Lower leg skin (tissue), 4 donors: ENCODE measurements at regions of chr12 and their contacts with region 1.

Region 1: DNA sequence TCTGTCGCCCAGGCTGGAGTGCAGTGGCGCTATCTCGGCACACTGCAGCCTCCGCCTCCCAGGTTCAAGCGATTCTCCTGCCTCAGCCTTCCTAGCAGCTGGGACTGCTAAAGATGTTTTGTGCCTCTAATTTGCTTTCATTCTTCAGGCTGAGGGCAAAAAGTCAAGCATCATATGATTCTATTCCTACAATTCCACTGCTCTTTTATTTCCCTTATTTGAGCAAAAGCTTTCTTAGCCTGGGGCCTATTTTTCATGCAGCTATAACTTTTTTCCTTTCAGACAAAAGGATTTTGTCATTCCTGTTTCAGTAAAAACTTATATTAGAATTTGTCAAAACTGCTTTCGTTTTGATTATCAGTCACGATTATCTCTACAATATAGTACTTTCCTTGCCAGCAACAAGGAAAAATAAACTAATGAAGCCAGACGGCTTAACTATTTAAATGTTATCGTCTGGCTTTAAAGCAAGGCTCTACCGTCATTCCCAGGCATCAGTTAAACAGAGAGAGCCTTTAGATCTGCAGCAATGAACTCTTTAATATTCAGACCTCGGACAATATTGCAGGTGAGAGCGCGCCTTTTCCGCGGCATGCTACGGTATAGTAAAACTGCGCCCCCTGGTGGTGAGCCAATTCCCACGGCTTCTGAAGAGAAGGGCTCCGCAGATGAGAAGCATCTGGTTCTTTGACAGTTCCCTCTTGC is 1.4 kb upstream of the SLC2A13 start:
- DNase-seq: peak; percentile 87 to 98
- H3K4me3 ChIP-seq: no peak overlapping the region
- CTCF ChIP-seq: peak in 1 of 3 donors; percentile 64
- POLR2A ChIP-seq: no peak

Region 2: DNA sequence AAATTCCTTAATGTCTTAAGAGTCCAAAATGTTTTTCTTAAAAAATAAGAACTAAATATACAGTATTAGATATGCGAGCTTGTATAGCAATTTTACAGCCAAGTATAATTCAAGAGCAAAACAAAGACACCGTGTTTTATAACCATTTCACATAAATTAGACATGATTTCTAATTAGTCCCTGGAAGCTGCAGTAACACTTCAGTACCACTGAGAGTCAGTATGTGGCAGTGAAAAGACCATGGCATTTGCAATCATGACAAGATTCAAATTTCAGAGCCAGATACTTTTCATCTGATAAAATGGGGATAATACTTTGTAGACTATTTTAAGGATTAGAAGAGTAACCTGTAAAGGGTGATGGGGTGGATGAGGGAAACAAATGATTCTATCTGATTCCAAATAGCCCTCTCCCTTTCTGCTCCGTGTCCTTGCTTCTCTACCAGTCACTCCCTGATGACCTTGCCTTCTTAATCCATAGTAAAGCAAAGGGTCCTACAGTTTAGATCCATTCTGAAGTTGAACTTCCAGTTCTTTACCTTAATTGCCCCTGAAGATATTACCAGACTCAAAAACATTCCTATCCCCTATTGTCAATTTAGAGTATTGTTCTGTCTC is 342.2 kb before region 1 on chr12:
- intact Hi-C with region 1: loop called (anchors 5 kb)
- DNase-seq: no peak
- H3K4me3 ChIP-seq: no peak overlapping the region
- CTCF ChIP-seq: no peak
- POLR2A ChIP-seq: no peak

Region 3: GRCh38 chr12:40010899-40011774 is 96.1 kb before region 1 on chr12:
- intact Hi-C with region 1: loop called (anchors 10 kb)
- DNase-seq: peak in 1 of 2 donors; percentile 62
- H3K4me3 ChIP-seq: no peak overlapping the region
- CTCF ChIP-seq: peak in 1 of 3 donors; percentile 19
- POLR2A ChIP-seq: no peak